Activated CD4-positive, alpha-beta memory T cell treated with anti-CD3 and anti-CD28 coated beads, Interleukin-2, amount 10 ng/mL, durations not matched to agents 7 days and 5 days (primary cell): ENCODE measurements at regions of chrX and their contacts with region 1.

Region 1: DNA sequence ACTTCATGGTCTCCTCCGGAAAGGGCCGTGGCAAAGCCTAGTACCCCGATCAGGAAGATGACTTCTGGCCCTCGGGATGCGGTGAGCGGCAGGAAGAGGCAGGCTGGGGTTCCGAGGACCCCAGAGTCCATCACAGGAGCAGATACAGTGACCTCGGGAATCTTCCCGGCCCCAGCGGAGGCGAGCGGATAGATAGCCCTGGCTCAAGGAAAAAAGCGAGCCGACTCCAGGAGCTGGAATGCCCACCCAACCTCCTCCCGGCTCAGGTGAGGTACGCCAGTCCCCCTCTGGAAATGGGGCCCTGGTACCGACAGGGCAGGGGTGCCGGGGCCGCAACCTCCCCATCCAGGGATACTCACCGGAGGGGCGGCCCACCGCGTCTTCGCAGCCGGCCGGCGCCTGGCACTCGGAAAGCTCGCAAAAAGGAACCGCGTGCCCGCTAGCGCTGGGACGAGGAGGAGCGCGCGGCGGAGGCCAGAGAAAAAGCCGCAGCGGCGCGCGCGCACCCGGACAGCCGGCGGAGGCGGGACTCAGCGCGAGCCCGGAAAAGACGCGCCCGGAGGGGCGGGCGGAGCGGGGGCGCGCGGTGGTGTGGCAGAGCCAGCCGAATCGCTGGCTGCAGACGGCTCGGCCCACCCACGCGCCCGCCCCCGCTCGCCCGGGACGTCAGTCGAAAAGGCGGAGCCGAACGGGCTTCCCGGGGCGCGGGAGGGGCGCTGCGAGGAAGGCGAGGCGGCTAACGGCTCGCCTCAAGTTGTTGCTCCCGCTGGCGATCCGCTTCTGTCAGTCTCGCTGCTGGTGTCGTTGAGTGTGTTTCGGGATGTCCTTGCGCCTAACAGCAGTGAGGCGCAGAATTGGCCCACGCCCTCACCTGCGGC is at the start of gene ACSL4:
- DNase-seq: peak; percentile 88
- H3K4me3 Mint-ChIP-seq: peak within 1 kb of the TSS; percentile 99
- H3K27ac Mint-ChIP-seq: peak within 1 kb of the TSS; percentile 98
- H3K4me1 Mint-ChIP-seq: peaks cover 32% of the 10 kb centered on the region
- H3K27me3 Mint-ChIP-seq: no peaks in the 10 kb centered on the region
- total RNA-seq, gene ACSL4: 62.1 to 64.9 TPM

Region 2: GRCh38 chrX:109782994-109783700 is 50.1 kb after region 1 on chrX:
- CTCF ChIA-PET with region 1: no interaction called
- POLR2A ChIA-PET with region 1: interaction called, 11 read pairs
- DNase-seq: no peak
- H3K4me3 Mint-ChIP-seq: peak overlapping the region; percentile 56
- H3K27ac Mint-ChIP-seq: peak overlapping the region; percentile 84
- H3K4me1 Mint-ChIP-seq: peaks cover 13% of the 10 kb centered on the region
- H3K27me3 Mint-ChIP-seq: no peaks in the 10 kb centered on the region